ENCODE measurements at regions of chr1 and their contacts with region 1.

Region 1: GRCh38 chr1:18956369-18957135 is at the start of gene IFFO2:
- DNase-seq: peak; percentile 99
- total RNA-seq, gene IFFO2: 12.1 to 12.2 TPM

Region 2: GRCh38 chr1:18761948-18762850 is 194.4 kb before region 1 on chr1:
- intact Hi-C with region 1: no loop called
- DNase-seq: no peak

Region 3: DNA sequence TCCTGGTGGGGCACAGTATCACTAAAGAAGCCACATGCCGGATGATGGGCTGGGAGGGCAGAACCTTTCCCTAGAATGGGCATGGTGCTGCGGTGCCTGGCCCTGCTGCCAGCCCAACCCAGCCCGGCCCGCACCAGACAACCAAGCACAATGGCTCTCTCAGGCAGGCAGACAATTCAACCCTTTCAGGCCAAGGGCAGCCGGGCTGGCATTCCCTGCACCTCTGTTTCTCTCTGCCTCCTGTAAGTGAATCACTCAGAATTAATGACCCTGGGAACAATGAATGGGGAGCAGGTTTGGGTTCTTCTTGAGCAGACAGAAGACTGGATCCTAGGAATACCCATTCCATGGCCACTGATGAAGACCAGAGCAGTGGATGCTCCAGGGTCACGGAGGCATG is 41.0 kb after region 1 on chr1:
- intact Hi-C with region 1: no loop called
- DNase-seq: no peak

Region 4: GRCh38 chr1:20589331-20590278 is 1633.1 kb after region 1 on chr1:
- intact Hi-C with region 1: loop called in 1 of 2 experiments (anchors 5 kb)
- DNase-seq: peak; percentile 94